ENCODE measurements at regions of chr19 and their contacts with region 1.

Region 1: GRCh38 chr19:4400135-4400936 is at the start of gene SH3GL1:
- DNase-seq: peak; percentile 94
- ATAC-seq: peak; percentile 67
- H3K4me3 Mint-ChIP-seq: peak within 1 kb of the TSS; percentile 97
- H3K27ac Mint-ChIP-seq: peak within 1 kb of the TSS; percentile 97
- H3K4me1 Mint-ChIP-seq: peaks cover 58% of the 10 kb centered on the region
- H3K27me3 Mint-ChIP-seq: no peaks in the 10 kb centered on the region
- total RNA-seq, gene SH3GL1: 43.3 to 57.7 TPM

Region 2: GRCh38 chr19:4310247-4311121 is 89.9 kb before region 1 on chr19:
- CTCF ChIA-PET with region 1: no interaction called
- DNase-seq: no peak
- ATAC-seq: peak; percentile 63
- H3K4me3 Mint-ChIP-seq: no peak overlapping the region
- H3K27ac Mint-ChIP-seq: no peak overlapping the region
- H3K4me1 Mint-ChIP-seq: peaks cover 2% of the 10 kb centered on the region
- H3K27me3 Mint-ChIP-seq: no peaks in the 10 kb centered on the region

Region 3: DNA sequence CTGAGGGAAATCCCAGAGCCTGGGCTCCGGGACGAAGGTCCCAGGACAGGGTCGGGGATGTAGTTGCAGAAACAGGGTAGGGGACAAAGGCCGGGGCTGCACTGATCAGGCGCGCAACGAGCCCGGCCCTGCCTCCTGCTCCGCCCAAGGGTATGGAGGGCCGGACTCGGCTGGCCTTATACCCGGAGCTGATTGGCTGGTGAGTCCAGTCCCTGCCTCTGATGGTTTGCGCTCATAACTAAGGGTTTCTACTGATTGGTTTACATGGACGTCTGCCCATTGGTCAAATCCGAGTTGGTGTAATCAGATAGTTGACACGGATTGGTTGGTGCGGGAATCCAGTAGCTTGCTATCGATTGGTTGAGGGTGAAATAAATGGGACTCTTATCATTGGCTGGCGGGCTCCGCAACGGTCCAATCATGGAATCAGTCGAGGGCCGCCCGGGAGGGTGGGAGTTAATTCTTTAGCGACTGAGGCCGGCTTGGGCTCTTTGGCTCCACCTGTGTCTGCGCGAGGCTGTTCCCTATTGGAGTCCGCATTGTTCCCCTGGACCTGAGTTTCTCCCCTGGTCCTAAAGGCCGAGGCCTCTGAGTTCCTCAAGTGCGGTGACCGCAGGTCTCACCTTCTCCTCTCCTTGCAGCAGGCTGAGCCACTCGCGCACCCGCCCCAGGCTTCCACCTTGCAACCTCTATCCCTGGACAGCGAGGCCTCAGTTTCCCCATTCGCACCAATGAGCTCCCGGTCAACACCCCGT is 57.5 kb before region 1 on chr19:
- CTCF ChIA-PET with region 1: interaction called, 23 read pairs
- DNase-seq: peak; percentile 97
- ATAC-seq: peak; percentile 89
- H3K4me3 Mint-ChIP-seq: peak overlapping the region; percentile 85
- H3K27ac Mint-ChIP-seq: peak overlapping the region; percentile 92
- H3K4me1 Mint-ChIP-seq: peaks cover 32% of the 10 kb centered on the region
- H3K27me3 Mint-ChIP-seq: no peaks in the 10 kb centered on the region

Region 4: GRCh38 chr19:4369888-4370260 is 30.5 kb before region 1 on chr19:
- CTCF ChIA-PET with region 1: interaction called, 34 read pairs
- DNase-seq: peak; percentile 89
- ATAC-seq: peak; percentile 80
- H3K4me3 Mint-ChIP-seq: peak overlapping the region; percentile 66
- H3K27ac Mint-ChIP-seq: peak overlapping the region; percentile 93
- H3K4me1 Mint-ChIP-seq: peaks cover 60% of the 10 kb centered on the region
- H3K27me3 Mint-ChIP-seq: no peaks in the 10 kb centered on the region

Region 5: GRCh38 chr19:4375164-4376027 is 24.9 kb before region 1 on chr19:
- CTCF ChIA-PET with region 1: interaction called, 34 read pairs
- DNase-seq: no peak
- ATAC-seq: no peak
- H3K4me3 Mint-ChIP-seq: no peak overlapping the region
- H3K27ac Mint-ChIP-seq: peak overlapping the region; percentile 19
- H3K4me1 Mint-ChIP-seq: peaks cover 76% of the 10 kb centered on the region
- H3K27me3 Mint-ChIP-seq: no peaks in the 10 kb centered on the region

Region 6: GRCh38 chr19:4431808-4432674 is 31.7 kb after region 1 on chr19:
- CTCF ChIA-PET with region 1: no interaction called
- DNase-seq: no peak
- ATAC-seq: no peak
- H3K4me3 Mint-ChIP-seq: no peak overlapping the region
- H3K27ac Mint-ChIP-seq: no peak overlapping the region
- H3K4me1 Mint-ChIP-seq: no peaks in the 10 kb centered on the region
- H3K27me3 Mint-ChIP-seq: no peaks in the 10 kb centered on the region

Measured in activated CD8-positive, alpha-beta memory T cell treated with anti-CD3 and anti-CD28 coated beads, Interleukin-2, amount 10 ng/mL, durations not matched to agents 7 days and 5 days (primary cell).